ENCODE measurements at regions of chr1 and their contacts with region 1.

Region 1: DNA sequence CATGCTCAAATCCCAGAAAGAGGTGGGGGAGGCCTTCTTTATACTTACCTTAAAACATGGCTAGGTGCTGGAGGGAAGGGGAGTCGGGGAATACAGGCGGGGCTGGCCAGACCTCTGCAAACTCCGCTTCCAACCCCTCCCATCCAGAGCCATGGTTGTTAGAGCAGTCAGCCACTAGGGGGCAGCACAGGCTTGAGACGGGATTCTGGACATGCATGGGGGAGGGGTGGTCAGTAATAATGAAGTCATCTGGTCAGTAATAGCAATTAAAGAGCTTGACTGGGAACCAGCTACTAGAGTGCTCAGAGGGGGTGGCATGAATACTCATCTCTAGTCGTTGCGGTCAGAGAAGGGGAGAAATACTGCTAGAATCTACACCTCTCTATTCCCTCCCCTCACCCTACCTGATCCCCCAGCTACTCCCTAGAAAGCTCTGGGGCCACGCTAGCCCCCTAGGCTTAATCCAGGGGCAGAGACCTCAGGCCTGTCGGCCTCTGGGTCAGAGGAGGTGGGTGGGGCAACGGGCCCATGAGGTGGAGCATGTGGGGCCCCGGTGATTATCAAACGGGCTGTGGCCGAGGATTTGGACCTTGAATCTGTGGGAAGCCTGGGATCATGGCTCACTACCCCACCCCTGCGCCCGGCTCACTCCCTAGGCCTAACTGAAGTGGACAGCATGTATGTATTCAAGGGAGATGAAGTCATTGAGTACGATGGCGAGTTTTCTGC is 2.9 kb downstream of the CASQ1 start:
- DNase-seq: peak; percentile 84
- ATAC-seq: peak; percentile 94
- H3K4me3 ChIP-seq: no peak overlapping the region
- H3K4me3 Mint-ChIP-seq: no peak overlapping the region
- H3K27ac ChIP-seq: no peak overlapping the region
- H3K27ac Mint-ChIP-seq: no peak overlapping the region
- H3K4me1 ChIP-seq: peaks cover 9 to 22% of the 10 kb centered on the region in 2 donors
- H3K4me1 Mint-ChIP-seq: peaks cover 3% of the 10 kb centered on the region
- H3K27me3 ChIP-seq: no peaks in the 10 kb centered on the region
- H3K27me3 Mint-ChIP-seq: peaks cover 3% of the 10 kb centered on the region
- CTCF ChIP-seq: peak; percentile 90

Region 2: GRCh38 chr1:159829273-159829634 is 364.0 kb before region 1 on chr1:
- CTCF ChIA-PET with region 1: no interaction called
- POLR2A ChIA-PET with region 1: no interaction called
- intact Hi-C with region 1: no loop called
- DNase-seq: peak; percentile 58
- ATAC-seq: peak; percentile 76
- H3K4me3 ChIP-seq: no peak overlapping the region
- H3K4me3 Mint-ChIP-seq: no peak overlapping the region
- H3K27ac ChIP-seq: no peak overlapping the region
- H3K27ac Mint-ChIP-seq: no peak overlapping the region
- H3K4me1 ChIP-seq: peaks cover 6 to 25% of the 10 kb centered on the region in 2 donors
- H3K4me1 Mint-ChIP-seq: peaks cover 18% of the 10 kb centered on the region
- H3K27me3 ChIP-seq: peaks cover 0 to 8% (median 3%) of the 10 kb centered on the region in 4 experiments
- H3K27me3 Mint-ChIP-seq: peaks cover 12% of the 10 kb centered on the region
- CTCF ChIP-seq: peak; percentile 34

Region 3: DNA sequence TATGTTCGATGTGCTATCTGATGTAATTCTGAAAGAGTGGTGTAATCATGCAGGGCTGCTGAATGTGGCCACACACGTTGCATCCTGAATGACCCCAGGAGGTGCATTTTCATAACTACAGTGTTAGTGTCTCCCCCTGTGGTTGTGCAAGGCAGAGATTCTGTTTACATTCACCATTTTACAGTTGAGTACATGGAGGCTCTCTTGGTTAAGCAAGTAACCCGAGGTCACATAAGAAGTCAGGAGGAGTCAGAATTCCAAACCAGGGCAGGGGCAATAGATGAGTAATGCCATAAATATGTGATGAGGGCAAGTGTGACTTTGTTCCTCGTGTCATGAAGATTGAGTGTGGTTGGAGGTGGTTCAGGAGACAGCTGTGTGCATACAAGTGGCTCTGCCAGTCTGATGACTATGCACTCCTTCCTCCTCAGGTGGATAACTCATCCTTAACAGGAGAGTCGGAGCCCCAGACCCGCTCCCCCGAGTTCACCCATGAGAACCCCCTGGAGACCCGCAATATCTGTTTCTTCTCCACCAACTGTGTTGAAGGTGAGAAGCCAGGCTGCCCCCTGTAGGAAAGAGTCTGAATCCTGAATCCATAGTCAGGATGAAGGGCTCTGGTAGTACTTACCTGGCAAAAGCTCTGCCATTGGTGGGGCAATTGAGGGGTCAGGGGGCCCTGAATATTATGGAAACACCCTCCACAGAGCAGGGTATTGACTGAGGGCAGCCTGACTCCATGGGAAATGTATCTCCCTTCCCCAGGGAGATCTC is 68.4 kb before region 1 on chr1:
- CTCF ChIA-PET with region 1: no interaction called
- POLR2A ChIA-PET with region 1: no interaction called
- intact Hi-C with region 1: no loop called
- DNase-seq: no peak
- ATAC-seq: no peak
- H3K4me3 ChIP-seq: no peak overlapping the region
- H3K4me3 Mint-ChIP-seq: no peak overlapping the region
- H3K27ac ChIP-seq: no peak overlapping the region
- H3K27ac Mint-ChIP-seq: no peak overlapping the region
- H3K4me1 ChIP-seq: no peaks in the 10 kb centered on the region
- H3K4me1 Mint-ChIP-seq: no peaks in the 10 kb centered on the region
- H3K27me3 ChIP-seq: no peaks in the 10 kb centered on the region
- H3K27me3 Mint-ChIP-seq: peaks cover 19% of the 10 kb centered on the region
- CTCF ChIP-seq: no peak

Region 4: GRCh38 chr1:160205242-160206035 is 12.2 kb after region 1 on chr1 and contains the start of gene PEA15:
- CTCF ChIA-PET with region 1: interaction called, 77 read pairs
- POLR2A ChIA-PET with region 1: interaction called, 7 read pairs
- intact Hi-C with region 1: loop called (anchors 1 kb)
- DNase-seq: peak; percentile 77
- ATAC-seq: peak; percentile 57
- H3K4me3 ChIP-seq: peak within 1 kb of the TSS; percentile 44 to 99 (median 92)
- H3K4me3 Mint-ChIP-seq: peak within 1 kb of the TSS; percentile 88
- H3K27ac ChIP-seq: peak within 1 kb of the TSS; percentile 98 to 99
- H3K27ac Mint-ChIP-seq: peak within 1 kb of the TSS; percentile 90
- H3K4me1 ChIP-seq: peaks cover 26 to 35% of the 10 kb centered on the region in 2 donors
- H3K4me1 Mint-ChIP-seq: peaks cover 66% of the 10 kb centered on the region
- H3K27me3 ChIP-seq: no peaks in the 10 kb centered on the region
- H3K27me3 Mint-ChIP-seq: no peaks in the 10 kb centered on the region
- CTCF ChIP-seq: no peak
- total RNA-seq, gene PEA15: 76.7 and 81.7 TPM in 2 replicates

Region 5: DNA sequence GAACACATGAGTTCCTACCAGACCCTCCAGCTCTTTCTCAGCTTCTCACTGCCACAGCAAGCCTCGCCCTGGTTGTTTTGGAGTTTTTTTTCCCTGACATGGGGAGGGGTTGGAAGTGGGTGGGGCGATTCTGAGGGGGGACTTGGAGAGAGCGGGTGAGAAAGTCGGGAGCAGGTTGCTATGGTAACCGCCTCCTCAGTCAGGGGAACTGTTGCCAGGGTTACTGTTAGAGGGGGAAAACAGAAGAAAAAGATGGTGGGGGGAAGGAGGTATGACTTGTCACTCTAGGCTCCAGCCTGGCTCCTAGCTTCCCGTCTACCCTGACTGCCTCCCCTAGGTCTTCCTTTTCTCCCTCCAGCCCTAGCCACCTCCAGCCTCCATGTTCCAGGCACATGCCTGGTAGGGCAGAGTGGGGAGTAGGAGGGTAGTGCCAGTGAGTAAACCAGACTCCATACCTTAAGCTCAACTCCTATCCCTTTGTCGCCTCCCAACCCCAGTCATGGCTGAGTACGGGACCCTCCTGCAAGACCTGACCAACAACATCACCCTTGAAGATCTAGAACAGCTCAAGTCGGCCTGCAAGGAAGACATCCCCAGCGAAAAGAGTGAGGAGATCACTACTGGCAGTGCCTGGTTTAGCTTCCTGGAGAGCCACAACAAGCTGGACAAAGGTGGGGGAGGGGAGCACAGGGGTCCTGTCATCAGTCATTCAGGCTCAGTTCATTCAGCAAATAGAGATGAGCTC is 18.0 kb after region 1 on chr1:
- CTCF ChIA-PET with region 1: interaction called, 77 read pairs
- POLR2A ChIA-PET with region 1: interaction called, 3 read pairs
- intact Hi-C with region 1: no loop called
- DNase-seq: no peak
- ATAC-seq: no peak
- H3K4me3 ChIP-seq: no peak overlapping the region
- H3K4me3 Mint-ChIP-seq: no peak overlapping the region
- H3K27ac ChIP-seq: peak overlapping the region in 1 of 2 donors; percentile 4
- H3K27ac Mint-ChIP-seq: peak overlapping the region; percentile 23
- H3K4me1 ChIP-seq: peaks cover 10 to 14% of the 10 kb centered on the region in 2 donors
- H3K4me1 Mint-ChIP-seq: peaks cover 37% of the 10 kb centered on the region
- H3K27me3 ChIP-seq: no peaks in the 10 kb centered on the region
- H3K27me3 Mint-ChIP-seq: no peaks in the 10 kb centered on the region
- CTCF ChIP-seq: no peak

Region 6: DNA sequence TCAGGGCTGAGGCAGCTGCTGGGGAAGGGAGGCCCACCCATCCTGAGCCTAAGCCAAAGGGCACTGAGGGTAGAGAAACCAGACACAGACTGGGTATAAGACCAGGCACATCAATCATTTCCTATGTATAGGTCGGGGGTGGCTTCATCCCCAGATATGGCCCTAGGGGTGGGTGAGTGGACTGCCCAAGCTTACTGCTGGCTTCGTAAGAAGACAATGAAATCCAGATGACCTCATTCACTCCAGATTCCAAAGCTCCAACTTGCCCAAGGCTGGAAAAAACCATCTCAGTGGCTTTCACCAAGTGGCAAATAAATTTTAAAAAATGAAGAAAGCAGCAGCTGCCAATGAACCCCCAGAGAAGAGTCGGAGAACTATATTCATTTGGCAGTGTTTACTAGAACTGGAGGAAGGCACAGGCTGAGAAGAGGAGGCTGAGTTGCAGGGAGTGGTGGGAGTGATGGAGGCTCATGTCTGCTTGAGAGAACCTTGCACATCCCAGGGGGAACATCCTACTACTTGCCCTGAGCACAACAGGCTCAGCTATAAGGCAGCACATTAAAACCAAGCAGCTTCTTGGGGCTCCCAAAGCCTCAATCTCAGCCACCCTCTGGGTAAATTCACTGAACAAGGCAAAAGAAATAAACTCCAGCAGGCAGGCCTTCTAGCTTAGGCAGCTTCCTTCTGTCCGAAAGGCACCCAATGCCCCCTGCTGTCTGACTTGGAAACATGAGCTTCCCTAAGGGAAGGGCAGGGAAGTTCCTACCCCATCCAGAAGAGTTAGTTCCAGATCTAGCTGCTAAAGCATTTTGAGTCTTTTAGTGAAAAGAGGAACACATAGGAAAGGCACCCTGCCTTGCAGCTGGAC is 26.0 kb after region 1 on chr1:
- CTCF ChIA-PET with region 1: interaction called, 103 read pairs
- POLR2A ChIA-PET with region 1: interaction called, 3 read pairs
- intact Hi-C with region 1: loop called (anchors 1 kb)
- DNase-seq: peak; percentile 34
- ATAC-seq: no peak
- H3K4me3 ChIP-seq: no peak overlapping the region
- H3K4me3 Mint-ChIP-seq: no peak overlapping the region
- H3K27ac ChIP-seq: peak overlapping the region in 1 of 2 donors; percentile 13
- H3K27ac Mint-ChIP-seq: peak overlapping the region; percentile 57
- H3K4me1 ChIP-seq: no peaks in the 10 kb centered on the region
- H3K4me1 Mint-ChIP-seq: no peaks in the 10 kb centered on the region
- H3K27me3 ChIP-seq: no peaks in the 10 kb centered on the region
- H3K27me3 Mint-ChIP-seq: no peaks in the 10 kb centered on the region
- CTCF ChIP-seq: no peak

Region 7: DNA sequence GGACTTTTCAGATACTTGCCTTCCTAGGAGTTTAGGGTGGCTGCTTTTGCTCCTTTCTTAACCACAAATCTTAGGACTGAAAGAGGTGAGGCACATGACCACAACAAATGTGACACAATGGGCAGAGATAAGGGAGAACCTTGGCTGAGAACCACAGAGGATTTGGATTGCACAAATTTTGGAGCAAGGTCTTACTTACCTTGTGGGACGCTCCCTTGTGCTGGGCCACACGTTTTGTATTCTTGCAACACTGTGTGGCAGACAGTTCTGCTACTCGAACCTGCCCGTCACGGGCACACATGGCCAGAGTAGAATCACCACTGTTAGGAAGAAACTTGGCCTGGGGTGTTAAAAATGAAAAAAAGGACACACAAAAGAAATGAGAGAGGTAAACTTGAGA is 45.2 kb after region 1 on chr1:
- CTCF ChIA-PET with region 1: interaction called, 12 read pairs
- POLR2A ChIA-PET with region 1: interaction called, 3 read pairs
- intact Hi-C with region 1: no loop called
- DNase-seq: no peak
- ATAC-seq: no peak
- H3K4me3 ChIP-seq: no peak overlapping the region
- H3K4me3 Mint-ChIP-seq: no peak overlapping the region
- H3K27ac ChIP-seq: no peak overlapping the region
- H3K27ac Mint-ChIP-seq: no peak overlapping the region
- H3K4me1 ChIP-seq: peaks cover 8 to 10% of the 10 kb centered on the region in 2 donors
- H3K4me1 Mint-ChIP-seq: peaks cover 11% of the 10 kb centered on the region
- H3K27me3 ChIP-seq: no peaks in the 10 kb centered on the region
- H3K27me3 Mint-ChIP-seq: no peaks in the 10 kb centered on the region
- CTCF ChIP-seq: no peak

Region 8: DNA sequence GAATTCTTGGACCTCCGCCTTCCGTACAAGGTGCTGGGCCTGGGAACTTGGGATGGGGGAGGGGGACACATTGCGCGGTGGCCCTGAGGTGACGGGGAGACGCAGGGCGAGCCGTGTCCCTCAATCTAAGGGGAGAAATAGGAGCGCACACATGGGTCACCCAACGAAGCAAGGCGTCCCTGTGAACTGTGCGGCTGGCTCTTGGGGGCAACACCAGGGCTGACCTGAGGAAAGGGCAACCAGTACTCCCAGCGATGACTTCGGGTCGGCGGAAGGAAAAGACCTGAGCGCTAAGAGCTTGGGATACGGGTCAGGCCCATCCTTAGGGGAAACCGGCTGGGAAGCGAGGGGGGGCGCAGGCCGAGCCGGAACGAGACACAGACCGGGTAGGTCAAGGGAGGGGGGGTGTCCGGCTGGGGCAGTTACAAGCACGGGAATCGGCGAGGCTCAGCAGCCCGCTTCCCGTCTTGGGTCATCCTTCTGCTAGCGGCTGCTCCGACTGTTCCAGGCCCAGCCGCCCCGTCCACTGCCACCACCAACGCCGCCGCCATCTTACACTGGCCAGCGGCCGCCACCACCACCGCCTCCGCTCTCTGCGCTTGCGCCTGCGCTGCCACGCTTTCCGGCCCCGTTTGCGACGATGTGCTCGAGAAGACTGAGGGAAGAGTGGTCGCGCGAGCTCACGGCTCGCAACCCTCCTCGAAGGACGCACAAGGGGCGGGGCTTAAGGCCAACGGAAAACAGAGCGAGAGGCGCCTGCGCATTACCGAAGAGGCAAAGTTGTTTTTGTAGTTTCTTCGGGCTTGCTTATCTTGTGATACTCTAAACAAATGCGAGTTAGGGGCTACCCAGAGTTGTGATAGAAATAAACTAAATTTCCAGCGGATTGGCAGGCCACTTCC is 68.9 kb after region 1 on chr1 and contains the start of gene DCAF8:
- CTCF ChIA-PET with region 1: interaction called, 11 read pairs
- POLR2A ChIA-PET with region 1: no interaction called
- intact Hi-C with region 1: no loop called
- DNase-seq: peak; percentile 98
- ATAC-seq: peak; percentile 92
- H3K4me3 ChIP-seq: peak within 1 kb of the TSS; percentile 96 to 100 (median 99)
- H3K4me3 Mint-ChIP-seq: peak within 1 kb of the TSS; percentile 100
- H3K27ac ChIP-seq: peak within 1 kb of the TSS; percentile 96 to 97
- H3K27ac Mint-ChIP-seq: peak within 1 kb of the TSS; percentile 92
- H3K4me1 ChIP-seq: peaks cover 20 to 22% of the 10 kb centered on the region in 2 donors
- H3K4me1 Mint-ChIP-seq: peaks cover 41% of the 10 kb centered on the region
- H3K27me3 ChIP-seq: no peaks in the 10 kb centered on the region
- H3K27me3 Mint-ChIP-seq: no peaks in the 10 kb centered on the region
- CTCF ChIP-seq: no peak
- total RNA-seq, gene DCAF8: 247 and 266 TPM in 2 replicates